Heart left ventricle (tissue), 16 donors: ENCODE measurements at regions of chr9 and their contacts with region 1.

Region 1: DNA sequence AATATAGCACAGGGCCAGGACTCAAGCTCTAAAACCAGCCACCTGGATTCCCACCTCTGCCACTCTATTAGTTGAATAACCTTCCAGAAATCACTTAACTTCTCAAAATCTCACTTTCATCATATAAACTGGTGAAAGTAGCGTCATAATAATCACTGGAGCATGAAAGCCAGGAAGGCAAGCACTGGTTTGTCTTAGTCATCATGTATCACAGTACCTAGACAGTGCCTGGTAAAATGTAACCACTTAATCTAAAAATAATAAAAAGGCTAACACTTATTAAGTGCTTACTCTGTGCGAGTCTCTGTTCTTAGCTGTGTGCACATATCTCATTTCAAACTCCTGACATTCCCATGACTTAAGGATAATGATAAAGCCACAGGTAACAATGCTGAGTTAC is 109.4 kb downstream of the ASTN2 start:
- DNase-seq: no peak
- ATAC-seq: no peak
- H3K4me3 ChIP-seq: no peak overlapping the region
- H3K27ac ChIP-seq: no peak overlapping the region
- H3K4me1 ChIP-seq: no peaks in the 10 kb centered on the region
- H3K27me3 ChIP-seq: peaks cover 0 to 18% (median 0%) of the 10 kb centered on the region in 9 donors
- CTCF ChIP-seq: no peak
- POLR2A ChIP-seq: no peak

Region 2: DNA sequence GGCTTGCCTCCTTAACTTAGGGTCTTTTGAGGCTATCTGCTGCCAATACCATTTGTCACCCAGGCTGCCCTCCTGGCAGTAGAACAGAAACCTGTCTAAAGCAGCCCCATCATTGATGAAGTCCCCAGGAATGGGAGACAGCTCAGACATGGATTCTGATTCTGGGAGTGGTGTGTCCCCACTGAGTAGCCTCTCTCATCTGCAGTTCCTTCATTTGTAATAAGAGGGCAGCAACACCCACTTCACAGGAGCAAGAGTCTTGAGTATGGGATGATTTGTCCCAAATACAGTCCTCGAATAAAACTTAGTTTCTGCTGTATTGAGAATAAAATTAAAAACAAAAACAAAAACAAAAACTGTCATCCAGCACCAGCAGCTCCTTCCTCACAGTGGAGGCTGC is 58.2 kb before region 1 on chr9:
- intact Hi-C with region 1: loop called in 1 of 10 experiments (anchors 10 kb)
- DNase-seq: no peak
- ATAC-seq: no peak
- H3K4me3 ChIP-seq: no peak overlapping the region
- H3K27ac ChIP-seq: no peak overlapping the region
- H3K4me1 ChIP-seq: no peaks in the 10 kb centered on the region
- H3K27me3 ChIP-seq: peaks cover 0 to 8% (median 0%) of the 10 kb centered on the region in 9 donors
- CTCF ChIP-seq: peak in 7 of 12 donors; percentile 10 to 50 (median 35)
- POLR2A ChIP-seq: no peak